ENCODE measurements at regions of chr3 and their contacts with region 1.

Region 1: GRCh38 chr3:30693470-30694120 is 87.2 kb downstream of the TGFBR2 start:
- DNase-seq: peak; percentile 35 to 49
- H3K4me3 ChIP-seq: no peak overlapping the region
- H3K27ac ChIP-seq: no peak overlapping the region
- H3K4me1 ChIP-seq: peaks cover 15% of the 10 kb centered on the region
- H3K27me3 ChIP-seq: no peaks in the 10 kb centered on the region
- CTCF ChIP-seq: peak; percentile 76

Region 2: GRCh38 chr3:29577250-29577649 is 1116.3 kb before region 1 on chr3:
- CTCF ChIA-PET with region 1: no interaction called
- POLR2A ChIA-PET with region 1: no interaction called
- intact Hi-C with region 1: no loop called
- DNase-seq: no peak
- H3K4me3 ChIP-seq: no peak overlapping the region
- H3K27ac ChIP-seq: no peak overlapping the region
- H3K4me1 ChIP-seq: no peaks in the 10 kb centered on the region
- H3K27me3 ChIP-seq: no peaks in the 10 kb centered on the region
- CTCF ChIP-seq: no peak

Region 3: DNA sequence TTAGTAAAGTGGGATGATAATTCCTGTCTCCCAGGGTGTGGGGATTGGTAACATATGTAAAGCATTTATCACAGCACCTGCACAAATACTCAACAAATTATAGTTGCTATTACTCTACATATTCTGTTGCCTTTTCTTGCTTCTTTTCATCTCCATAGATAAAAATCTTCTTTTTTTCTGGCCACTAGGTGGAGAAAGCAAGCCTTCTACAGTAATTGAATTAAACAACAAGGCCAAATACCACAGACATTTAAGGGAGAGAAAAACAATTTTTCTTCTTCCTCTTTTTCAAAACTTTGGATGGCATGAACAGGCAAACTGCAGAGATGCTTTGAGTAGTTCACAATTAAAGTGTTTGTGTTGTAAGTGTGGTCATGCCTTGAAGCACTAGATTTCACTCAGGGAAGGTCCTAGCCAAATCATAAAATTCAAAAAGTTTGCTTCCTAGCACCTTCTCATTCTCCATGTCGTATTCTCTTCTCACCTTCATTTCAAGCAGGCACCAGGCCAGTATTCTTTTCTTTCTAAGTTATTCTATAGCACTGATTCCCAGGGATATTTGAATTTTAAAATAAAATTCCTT is 580.6 kb before region 1 on chr3:
- CTCF ChIA-PET with region 1: no interaction called
- POLR2A ChIA-PET with region 1: no interaction called
- intact Hi-C with region 1: loop called (anchors 1 kb)
- DNase-seq: no peak
- H3K4me3 ChIP-seq: no peak overlapping the region
- H3K27ac ChIP-seq: no peak overlapping the region
- H3K4me1 ChIP-seq: no peaks in the 10 kb centered on the region
- H3K27me3 ChIP-seq: no peaks in the 10 kb centered on the region
- CTCF ChIP-seq: peak; percentile 71

Region 4: GRCh38 chr3:30347679-30348216 is 345.8 kb before region 1 on chr3:
- CTCF ChIA-PET with region 1: no interaction called
- POLR2A ChIA-PET with region 1: no interaction called
- intact Hi-C with region 1: loop called (anchors 10 kb)
- DNase-seq: peak in 1 of 2 experiments; percentile 47
- H3K4me3 ChIP-seq: no peak overlapping the region
- H3K27ac ChIP-seq: no peak overlapping the region
- H3K4me1 ChIP-seq: peaks cover 18% of the 10 kb centered on the region
- H3K27me3 ChIP-seq: no peaks in the 10 kb centered on the region
- CTCF ChIP-seq: no peak

Region 5: DNA sequence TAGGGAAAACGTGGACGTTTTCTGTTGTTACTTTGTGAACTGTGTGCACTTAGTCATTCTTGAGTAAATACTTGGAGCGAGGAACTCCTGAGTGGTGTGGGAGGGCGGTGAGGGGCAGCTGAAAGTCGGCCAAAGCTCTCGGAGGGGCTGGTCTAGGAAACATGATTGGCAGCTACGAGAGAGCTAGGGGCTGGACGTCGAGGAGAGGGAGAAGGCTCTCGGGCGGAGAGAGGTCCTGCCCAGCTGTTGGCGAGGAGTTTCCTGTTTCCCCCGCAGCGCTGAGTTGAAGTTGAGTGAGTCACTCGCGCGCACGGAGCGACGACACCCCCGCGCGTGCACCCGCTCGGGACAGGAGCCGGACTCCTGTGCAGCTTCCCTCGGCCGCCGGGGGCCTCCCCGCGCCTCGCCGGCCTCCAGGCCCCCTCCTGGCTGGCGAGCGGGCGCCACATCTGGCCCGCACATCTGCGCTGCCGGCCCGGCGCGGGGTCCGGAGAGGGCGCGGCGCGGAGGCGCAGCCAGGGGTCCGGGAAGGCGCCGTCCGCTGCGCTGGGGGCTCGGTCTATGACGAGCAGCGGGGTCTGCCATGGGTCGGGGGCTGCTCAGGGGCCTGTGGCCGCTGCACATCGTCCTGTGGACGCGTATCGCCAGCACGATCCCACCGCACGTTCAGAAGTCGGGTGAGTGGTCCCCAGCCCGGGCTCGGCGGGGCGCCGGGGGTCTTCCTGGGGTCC is 87.1 kb before region 1 on chr3 and contains the start of gene TGFBR2:
- CTCF ChIA-PET with region 1: no interaction called
- POLR2A ChIA-PET with region 1: no interaction called
- intact Hi-C with region 1: loop called (anchors 2 kb)
- DNase-seq: peak; percentile 85 to 92
- H3K4me3 ChIP-seq: peak within 1 kb of the TSS; percentile 80
- H3K27ac ChIP-seq: peak within 1 kb of the TSS; percentile 67
- H3K4me1 ChIP-seq: peaks cover 24% of the 10 kb centered on the region
- H3K27me3 ChIP-seq: no peaks in the 10 kb centered on the region
- CTCF ChIP-seq: no peak
- total RNA-seq, gene TGFBR2: 26.4 and 33.6 TPM in 2 replicates

Region 6: DNA sequence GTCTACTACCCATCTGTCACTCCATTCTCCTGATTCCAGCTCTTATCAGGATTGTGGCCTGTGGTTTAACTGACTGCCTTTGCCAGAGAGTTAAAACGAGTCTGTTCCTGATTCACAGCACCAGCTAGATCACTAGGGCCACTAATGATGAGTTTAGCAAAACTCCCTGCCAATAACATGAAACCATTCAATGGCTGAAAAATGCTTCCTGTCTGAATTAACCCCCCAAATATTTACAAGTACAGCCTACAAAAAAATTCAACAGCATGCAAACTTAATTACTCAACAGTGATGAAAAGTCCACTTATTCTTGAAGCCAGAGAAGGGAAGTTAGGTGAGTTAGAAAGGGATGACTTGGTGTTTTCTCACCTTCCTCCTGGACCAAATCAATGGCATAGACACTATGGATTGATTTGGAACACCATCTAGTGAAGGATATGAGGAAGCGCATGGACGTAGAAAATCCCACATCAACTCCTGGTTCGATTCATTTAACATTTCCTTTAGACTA is 54.2 kb after region 1 on chr3:
- CTCF ChIA-PET with region 1: no interaction called
- POLR2A ChIA-PET with region 1: no interaction called
- intact Hi-C with region 1: loop called (anchors 2 kb)
- DNase-seq: peak in 1 of 2 experiments; percentile 57
- H3K4me3 ChIP-seq: no peak overlapping the region
- H3K27ac ChIP-seq: no peak overlapping the region
- H3K4me1 ChIP-seq: peaks cover 8% of the 10 kb centered on the region; the same call in 1 of the 2 replicates
- H3K27me3 ChIP-seq: no peaks in the 10 kb centered on the region
- CTCF ChIP-seq: peak; percentile 32; the same call in 1 of the 2 replicates

Measured in PC-9 (cell line).